Heart right ventricle (tissue), 16 donors: ENCODE measurements at regions of chr14 and their contacts with region 1.

Region 1: DNA sequence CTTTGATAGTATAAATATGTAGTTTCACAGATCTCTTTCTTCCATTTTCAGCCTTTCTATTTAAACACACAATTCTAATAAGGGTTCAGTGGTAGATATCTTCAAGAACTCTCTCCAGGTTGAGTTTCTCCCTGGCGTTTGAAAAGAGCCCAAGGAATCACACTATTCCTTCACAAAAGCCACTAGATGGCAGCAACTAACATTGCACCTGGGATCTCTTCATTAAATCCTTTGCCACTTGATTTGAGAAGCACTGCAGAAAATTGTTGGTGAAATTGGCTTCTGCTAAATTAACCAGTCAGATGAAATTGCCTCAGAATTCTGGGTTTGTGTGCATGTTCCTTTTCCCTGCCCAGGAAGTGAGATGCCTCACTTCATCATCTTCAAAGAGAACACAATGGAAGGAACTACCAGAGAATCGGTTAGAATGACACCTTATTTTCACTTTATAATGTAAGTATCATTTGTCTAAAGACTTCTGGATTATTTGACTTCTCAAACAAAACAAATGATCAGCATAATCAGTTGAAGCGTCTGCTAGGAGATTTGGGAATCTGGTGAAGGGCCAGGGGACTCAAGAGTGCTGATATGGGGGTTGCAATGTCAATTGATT is 6.8 kb downstream of the CCDC198 start:
- DNase-seq: no peak
- ATAC-seq: peak in 3 of 8 donors; percentile 37 to 56 (median 52)
- H3K4me3 ChIP-seq: no peak overlapping the region
- H3K27ac ChIP-seq: no peak overlapping the region
- H3K4me1 ChIP-seq: peaks cover 0 to 11% (median 0%) of the 10 kb centered on the region in 9 donors
- H3K27me3 ChIP-seq: peaks cover 0 to 9% (median 0%) of the 10 kb centered on the region in 7 donors
- CTCF ChIP-seq: peak in 8 of 9 donors; percentile 29 to 76 (median 64)

Region 2: DNA sequence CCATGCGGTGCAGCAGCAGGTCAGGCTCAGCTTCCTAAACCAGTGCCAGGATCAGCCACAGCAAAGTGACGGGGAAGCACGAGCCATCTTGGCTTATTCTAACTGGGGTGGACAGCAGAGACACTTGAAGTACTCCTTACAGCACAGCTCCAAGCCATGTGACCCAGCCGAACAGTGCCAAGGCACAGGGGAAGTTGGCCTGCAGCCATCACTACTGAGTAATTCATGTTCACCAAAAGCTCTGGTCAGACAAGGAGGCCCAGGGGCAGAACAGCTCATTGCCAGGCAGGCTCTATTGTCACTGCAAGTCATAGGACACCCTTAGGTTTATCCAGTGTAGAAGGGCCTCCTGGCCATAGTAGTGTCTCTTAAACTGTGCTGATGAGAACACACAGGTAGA is 402.4 kb after region 1 on chr14:
- intact Hi-C with region 1: loop called in 1 of 10 experiments (anchors 10 kb)
- DNase-seq: peak; percentile 28 to 34
- ATAC-seq: peak; percentile 34 to 96 (median 72)
- H3K4me3 ChIP-seq: no peak overlapping the region
- H3K27ac ChIP-seq: no peak overlapping the region
- H3K4me1 ChIP-seq: no peaks in the 10 kb centered on the region
- H3K27me3 ChIP-seq: peaks cover 0 to 3% (median 0%) of the 10 kb centered on the region in 7 donors
- CTCF ChIP-seq: no peak

Region 3: GRCh38 chr14:58072288-58073071 is 585.6 kb after region 1 on chr14:
- intact Hi-C with region 1: loop called (anchors 1 to 5 kb)
- DNase-seq: peak in 1 of 2 donors; percentile 62
- ATAC-seq: peak in 7 of 8 donors; percentile 76 to 84 (median 79)
- H3K4me3 ChIP-seq: peak overlapping the region in 6 of 10 donors; percentile 9 to 42 (median 36)
- H3K27ac ChIP-seq: no peak overlapping the region
- H3K4me1 ChIP-seq: peaks cover 0 to 14% (median 7%) of the 10 kb centered on the region in 9 donors
- H3K27me3 ChIP-seq: no peaks in the 10 kb centered on the region
- CTCF ChIP-seq: peak; percentile 56 to 88 (median 74)

Region 4: DNA sequence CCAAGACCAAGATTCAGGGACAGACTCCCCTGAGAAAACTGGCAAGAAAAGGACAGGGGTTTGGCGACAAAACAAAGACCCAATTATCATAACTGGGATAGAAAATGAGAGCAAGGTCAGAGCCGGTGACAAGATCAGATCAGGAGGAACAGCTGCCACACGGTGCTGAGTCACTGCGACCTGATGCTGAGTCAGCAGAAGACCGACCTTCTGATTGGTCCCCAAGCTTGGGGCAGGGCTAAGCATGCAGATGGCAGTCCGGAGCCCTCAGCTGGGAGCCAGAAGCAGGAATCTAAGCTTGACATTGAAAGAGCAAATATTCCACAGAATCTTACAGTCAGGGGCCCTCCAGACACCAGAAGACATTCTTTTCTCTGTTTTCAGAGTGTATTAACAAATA is 684.2 kb after region 1 on chr14:
- intact Hi-C with region 1: loop called in 1 of 10 experiments (anchors 10 kb)
- DNase-seq: peak; percentile 33 to 46
- ATAC-seq: peak; percentile 76 to 95 (median 84)
- H3K4me3 ChIP-seq: no peak overlapping the region
- H3K27ac ChIP-seq: no peak overlapping the region
- H3K4me1 ChIP-seq: peaks cover 0 to 12% (median 4%) of the 10 kb centered on the region in 9 donors
- H3K27me3 ChIP-seq: no peaks in the 10 kb centered on the region
- CTCF ChIP-seq: no peak